HepG2 (cell line): ENCODE measurements at regions of chr11 and their contacts with region 1.

Region 1: GRCh38 chr11:30917859-30918478 is 331.8 kb upstream of the MPPED2 start:
- DNase-seq: peak; percentile 40
- ATAC-seq: peak; percentile 69
- H3K4me3 ChIP-seq: no peak overlapping the region
- H3K27ac ChIP-seq: no peak overlapping the region
- H3K4me1 ChIP-seq: no peaks in the 10 kb centered on the region
- H3K27me3 ChIP-seq: no peaks in the 10 kb centered on the region
- CTCF ChIP-seq: peak; percentile 58
- EP300 ChIP-seq: no peak
- POLR2A ChIP-seq: no peak
- RAD21 ChIP-seq: no peak

Region 2: DNA sequence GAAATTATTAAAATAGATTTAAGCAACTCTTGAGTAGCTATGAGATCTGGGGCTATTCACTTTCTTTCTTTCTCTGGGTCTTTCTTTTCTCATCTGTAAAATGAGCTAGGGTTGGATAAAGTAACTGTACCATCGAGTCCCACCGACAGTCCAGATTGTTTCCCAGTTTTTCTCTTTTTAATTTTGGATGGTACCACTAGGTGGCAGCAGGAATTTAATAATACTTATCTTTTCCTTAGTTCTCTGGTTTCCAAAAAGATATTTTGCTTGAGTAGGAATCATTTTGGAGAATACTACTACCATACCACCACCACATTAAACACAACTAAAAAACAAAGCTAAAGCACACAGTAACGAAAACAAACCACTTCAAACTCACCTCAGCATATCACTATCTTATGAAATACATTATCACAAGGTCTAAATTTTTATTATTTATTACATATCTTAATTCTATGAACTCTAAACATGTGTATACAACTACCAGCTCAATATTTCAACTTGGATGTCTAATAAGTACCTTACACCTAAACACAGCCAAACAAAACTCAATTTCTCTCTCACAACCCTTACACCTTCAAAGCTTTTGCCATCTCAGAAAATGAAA is 1485.1 kb before region 1 on chr11:
- CTCF ChIA-PET with region 1: no interaction called
- POLR2A ChIA-PET with region 1: no interaction called
- in situ Hi-C with region 1: loop called (anchors 25 kb)
- intact Hi-C with region 1: loop called (anchors 2 kb)
- DNase-seq: peak; percentile 2
- ATAC-seq: no peak
- H3K4me3 ChIP-seq: no peak overlapping the region
- H3K27ac ChIP-seq: no peak overlapping the region
- H3K4me1 ChIP-seq: no peaks in the 10 kb centered on the region
- H3K27me3 ChIP-seq: no peaks in the 10 kb centered on the region
- CTCF ChIP-seq: peak; percentile 40
- EP300 ChIP-seq: no peak
- POLR2A ChIP-seq: no peak
- RAD21 ChIP-seq: no peak

Region 3: DNA sequence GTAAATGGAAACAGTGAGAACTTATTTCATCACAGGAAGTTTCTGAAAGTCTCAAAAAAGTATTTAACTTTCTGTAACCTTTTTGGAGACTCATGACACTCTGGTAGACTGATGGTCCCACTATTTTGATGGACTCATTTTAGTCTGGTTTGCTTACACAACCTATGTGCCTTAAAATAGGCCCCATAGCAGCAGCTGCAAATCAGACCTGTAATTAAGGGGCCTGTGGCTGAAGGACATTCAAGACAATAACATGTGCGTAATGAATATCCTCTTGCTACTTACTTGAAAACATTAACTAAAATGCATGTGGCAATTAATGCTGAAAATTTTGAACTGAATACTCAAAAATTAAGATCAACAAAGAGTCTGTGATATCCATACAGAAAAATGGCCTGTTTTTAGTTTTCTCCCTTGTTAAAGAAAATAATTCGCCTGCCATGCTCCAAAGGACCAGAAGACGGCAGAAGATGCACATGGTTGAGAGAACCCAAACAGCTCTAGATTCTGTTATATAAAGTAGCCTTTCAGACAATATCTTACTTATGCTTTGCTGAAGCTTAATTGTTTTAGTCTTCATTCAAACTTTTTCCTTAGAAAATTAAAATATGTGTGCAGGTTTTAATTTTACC is 1469.6 kb before region 1 on chr11:
- CTCF ChIA-PET with region 1: no interaction called
- POLR2A ChIA-PET with region 1: no interaction called
- in situ Hi-C with region 1: loop called (anchors 25 kb)
- intact Hi-C with region 1: loop called (anchors 2 kb)
- DNase-seq: no peak
- ATAC-seq: no peak
- H3K4me3 ChIP-seq: no peak overlapping the region
- H3K27ac ChIP-seq: no peak overlapping the region
- H3K4me1 ChIP-seq: no peaks in the 10 kb centered on the region
- H3K27me3 ChIP-seq: no peaks in the 10 kb centered on the region
- CTCF ChIP-seq: peak; percentile 21; the same call in 1 of the 2 replicates
- EP300 ChIP-seq: no peak
- POLR2A ChIP-seq: no peak
- RAD21 ChIP-seq: no peak

Region 4: GRCh38 chr11:30346068-30346688 is 571.8 kb before region 1 on chr11:
- CTCF ChIA-PET with region 1: interaction called, 14 read pairs
- POLR2A ChIA-PET with region 1: no interaction called
- in situ Hi-C with region 1: loop called (anchors 5 kb)
- intact Hi-C with region 1: loop called (anchors 1 kb)
- DNase-seq: peak; percentile 52
- ATAC-seq: peak; percentile 69
- H3K4me3 ChIP-seq: no peak overlapping the region
- H3K27ac ChIP-seq: no peak overlapping the region
- H3K4me1 ChIP-seq: no peaks in the 10 kb centered on the region
- H3K27me3 ChIP-seq: peaks cover 0 to 2% of the 10 kb centered on the region in 2 experiments; a peak in 1 of 5 replicates
- CTCF ChIP-seq: peak; percentile 60
- EP300 ChIP-seq: no peak
- POLR2A ChIP-seq: no peak
- RAD21 ChIP-seq: 0 out of 2 replicates have a peak, but pooled peaks have one; percentile 17

Region 5: GRCh38 chr11:30889143-30889794 is 28.7 kb before region 1 on chr11:
- CTCF ChIA-PET with region 1: no interaction called
- POLR2A ChIA-PET with region 1: no interaction called
- in situ Hi-C with region 1: no loop called
- intact Hi-C with region 1: no loop called
- DNase-seq: no peak
- ATAC-seq: no peak
- H3K4me3 ChIP-seq: no peak overlapping the region
- H3K27ac ChIP-seq: no peak overlapping the region
- H3K4me1 ChIP-seq: no peaks in the 10 kb centered on the region
- H3K27me3 ChIP-seq: no peaks in the 10 kb centered on the region
- CTCF ChIP-seq: no peak
- EP300 ChIP-seq: no peak
- POLR2A ChIP-seq: no peak
- RAD21 ChIP-seq: no peak

Region 6: DNA sequence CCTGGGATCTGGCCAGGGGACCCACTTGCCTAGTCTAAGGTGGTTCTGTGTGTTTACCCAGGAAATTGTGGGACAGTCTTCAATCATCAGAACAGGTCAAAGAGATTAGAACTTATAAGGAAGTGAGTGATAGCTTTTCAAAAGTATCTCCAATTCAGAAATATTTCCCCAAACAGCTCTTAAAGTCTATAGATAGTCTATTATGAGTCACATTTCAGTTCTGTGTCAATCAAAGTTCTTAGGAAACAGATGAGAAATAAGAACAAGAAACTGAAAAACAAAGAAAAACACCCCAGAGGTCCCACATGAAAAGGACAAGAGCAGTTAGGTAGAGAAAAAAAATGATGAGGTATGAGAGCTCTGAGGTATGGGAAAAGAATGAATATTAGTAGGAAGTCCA is 49.6 kb after region 1 on chr11:
- CTCF ChIA-PET with region 1: no interaction called
- POLR2A ChIA-PET with region 1: no interaction called
- in situ Hi-C with region 1: no loop called
- intact Hi-C with region 1: no loop called
- DNase-seq: no peak
- ATAC-seq: no peak
- H3K4me3 ChIP-seq: no peak overlapping the region
- H3K27ac ChIP-seq: no peak overlapping the region
- H3K4me1 ChIP-seq: no peaks in the 10 kb centered on the region
- H3K27me3 ChIP-seq: no peaks in the 10 kb centered on the region
- CTCF ChIP-seq: no peak
- EP300 ChIP-seq: no peak
- POLR2A ChIP-seq: no peak
- RAD21 ChIP-seq: no peak